Activated B cell treated with CpG ODN at 0.5 μM for 24 hours (primary cell): ENCODE measurements at regions of chr4 and their contacts with region 1.

Region 1: DNA sequence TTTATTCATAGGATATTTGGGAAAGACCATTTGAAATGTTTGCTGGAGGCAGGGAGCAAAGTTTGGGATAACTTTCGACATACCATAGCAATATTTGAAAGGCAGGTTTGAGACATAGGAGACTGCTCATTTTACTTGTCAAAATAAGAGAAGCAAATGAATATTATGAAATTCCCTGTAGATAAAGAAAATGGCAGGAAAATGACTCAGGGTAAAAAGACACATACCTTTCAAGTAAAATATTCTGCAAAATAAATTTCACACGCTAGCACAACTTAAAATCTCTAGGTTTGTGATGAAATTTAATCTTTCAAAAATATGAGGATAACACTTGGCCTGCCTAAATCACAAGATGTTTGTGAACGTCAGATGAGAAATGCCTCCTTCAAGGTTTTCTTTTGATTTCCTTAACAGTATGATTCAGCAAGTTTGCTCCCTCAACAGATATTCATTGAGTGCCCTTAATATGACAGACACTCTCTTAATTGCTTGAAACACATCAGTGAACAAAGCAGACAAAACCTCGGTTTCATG is 6.6 kb downstream of the TMEM156 start:
- DNase-seq: no peak
- ATAC-seq: no peak
- H3K4me3 Mint-ChIP-seq: no peak overlapping the region
- H3K27ac Mint-ChIP-seq: peak overlapping the region; percentile 48
- H3K4me1 Mint-ChIP-seq: peaks cover 70% of the 10 kb centered on the region
- H3K27me3 Mint-ChIP-seq: no peaks in the 10 kb centered on the region
- CTCF ChIP-seq: no peak

Region 2: GRCh38 chr4:37054531-37055077 is 1971.0 kb before region 1 on chr4:
- CTCF ChIA-PET with region 1: no interaction called
- POLR2A ChIA-PET with region 1: no interaction called
- intact Hi-C with region 1: no loop called
- DNase-seq: no peak
- ATAC-seq: no peak
- H3K4me3 Mint-ChIP-seq: no peak overlapping the region
- H3K27ac Mint-ChIP-seq: no peak overlapping the region
- H3K4me1 Mint-ChIP-seq: no peaks in the 10 kb centered on the region
- H3K27me3 Mint-ChIP-seq: no peaks in the 10 kb centered on the region
- CTCF ChIP-seq: no peak

Region 3: DNA sequence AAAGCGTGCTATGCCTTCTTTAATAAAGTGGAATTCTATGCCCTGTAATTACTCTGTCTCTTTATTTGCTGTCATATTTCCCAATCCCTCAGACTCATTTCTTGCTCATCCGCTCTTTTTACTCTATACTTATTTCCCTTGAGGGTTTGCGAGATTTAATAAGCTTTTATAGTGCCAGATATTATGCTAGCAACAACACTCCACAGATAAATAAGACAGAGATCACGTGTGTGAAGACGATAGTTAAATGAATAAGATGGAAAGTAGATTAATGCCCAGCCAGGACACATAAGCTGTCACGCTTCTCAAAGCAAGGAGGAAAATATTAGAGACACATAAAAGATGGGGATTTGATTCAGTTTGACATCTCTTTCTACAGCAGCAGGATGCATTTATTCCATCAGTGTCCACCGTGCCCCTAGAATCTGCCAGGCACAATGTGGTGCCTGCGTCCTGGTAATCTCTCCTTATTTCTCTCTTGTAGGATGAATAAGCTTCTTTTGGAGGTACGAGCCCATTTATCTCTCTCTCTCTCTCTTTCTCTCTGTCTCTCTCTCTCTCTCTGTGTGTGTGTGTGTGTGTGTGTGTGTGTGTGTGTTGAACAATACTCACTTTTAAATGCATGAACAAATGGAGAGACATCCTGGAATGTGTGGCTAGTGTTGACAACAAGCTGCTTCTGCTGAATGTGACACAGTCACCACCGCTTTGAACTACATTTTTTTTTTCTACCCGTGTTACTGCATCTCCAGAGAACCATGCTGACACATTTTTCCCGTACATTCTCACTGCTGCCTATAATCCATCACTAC is 41.6 kb before region 1 on chr4:
- CTCF ChIA-PET with region 1: no interaction called
- POLR2A ChIA-PET with region 1: interaction called, 21 read pairs
- intact Hi-C with region 1: loop called (anchors 5 kb)
- DNase-seq: no peak
- ATAC-seq: no peak
- H3K4me3 Mint-ChIP-seq: no peak overlapping the region
- H3K27ac Mint-ChIP-seq: peak overlapping the region; percentile 25
- H3K4me1 Mint-ChIP-seq: peaks cover 53% of the 10 kb centered on the region
- H3K27me3 Mint-ChIP-seq: no peaks in the 10 kb centered on the region
- CTCF ChIP-seq: no peak

Region 4: DNA sequence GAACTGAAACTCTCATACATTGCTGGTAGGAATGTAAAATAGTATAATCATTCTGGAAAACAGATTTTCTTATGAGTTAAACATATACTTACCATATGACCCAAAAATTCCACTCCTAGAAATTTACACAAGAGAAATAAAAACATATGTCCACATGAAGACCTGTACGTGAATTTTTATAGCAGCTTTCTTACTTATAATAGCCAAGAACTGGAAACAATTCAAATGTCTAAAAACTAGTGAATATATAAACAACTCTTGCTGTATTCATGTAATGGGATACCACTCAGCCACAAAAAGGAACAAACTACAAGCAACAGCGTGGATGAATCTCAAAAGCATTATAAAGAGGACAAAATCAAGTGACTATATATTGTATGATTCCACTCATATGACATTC is 20.9 kb before region 1 on chr4:
- CTCF ChIA-PET with region 1: no interaction called
- POLR2A ChIA-PET with region 1: interaction called, 3 read pairs
- intact Hi-C with region 1: loop called (anchors 2 kb)
- DNase-seq: no peak
- ATAC-seq: no peak
- H3K4me3 Mint-ChIP-seq: no peak overlapping the region
- H3K27ac Mint-ChIP-seq: peak overlapping the region; percentile 57
- H3K4me1 Mint-ChIP-seq: peaks cover 23% of the 10 kb centered on the region
- H3K27me3 Mint-ChIP-seq: no peaks in the 10 kb centered on the region
- CTCF ChIP-seq: no peak